Naive thymus-derived CD8-positive, alpha-beta T cell (primary cell): ENCODE measurements at regions of chr10 and their contacts with region 1.

Region 1: DNA sequence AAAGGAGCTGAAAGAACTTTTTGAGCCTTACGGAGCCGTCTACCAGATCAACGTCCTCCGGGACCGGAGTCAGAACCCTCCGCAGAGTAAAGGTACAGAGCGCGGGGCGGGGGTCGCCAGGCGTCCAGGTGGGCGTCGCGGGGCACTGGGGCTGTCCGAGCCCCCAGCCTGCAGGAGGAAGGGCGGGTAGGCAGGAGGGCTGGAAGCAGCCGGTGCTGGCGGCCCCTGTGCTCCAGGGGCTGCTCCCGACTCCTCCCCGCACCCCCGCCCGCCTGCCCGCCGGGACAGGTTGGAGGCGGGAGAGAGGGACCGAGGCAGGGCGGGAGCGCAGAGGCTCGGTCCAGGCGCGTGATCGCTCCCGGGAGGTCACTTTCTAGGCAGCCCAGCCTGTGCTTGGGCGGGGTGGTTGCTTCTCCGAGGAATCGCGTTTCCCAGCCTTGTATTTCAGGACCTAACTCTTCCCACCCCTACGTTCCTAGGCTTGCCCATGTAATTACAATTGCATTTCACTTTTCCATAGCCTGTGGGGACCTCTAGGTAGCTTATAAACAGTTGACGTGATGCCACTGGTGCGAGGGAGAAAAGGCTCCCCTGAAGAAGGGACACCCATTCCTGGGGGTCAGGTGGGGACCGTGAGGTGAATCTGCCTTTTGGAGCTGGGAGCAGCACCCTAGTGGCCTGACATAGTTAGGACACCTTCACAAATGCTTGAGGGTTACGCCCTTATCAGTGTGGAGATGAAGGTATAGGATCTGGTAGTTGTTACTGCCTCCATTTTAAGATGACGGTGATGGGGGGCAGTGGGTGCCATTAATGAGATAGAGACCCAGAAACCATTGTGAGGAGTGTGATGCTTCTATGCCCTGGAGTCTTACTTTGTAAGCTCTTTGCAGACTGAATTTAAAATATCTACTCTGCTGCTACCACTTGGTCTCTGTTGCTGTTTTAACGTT is 148.2 kb downstream of the CELF2 start:
- DNase-seq: peak; percentile 50 to 90 (median 77)
- ATAC-seq: peak; percentile 41 to 66
- H3K4me3 Mint-ChIP-seq: peak overlapping the region in 3 of 10 donors; percentile 98 to 100 (median 99)
- H3K27ac Mint-ChIP-seq: peak overlapping the region in 8 of 10 donors; percentile 96 to 100 (median 99)
- H3K4me1 Mint-ChIP-seq: peaks cover 31 to 47% (median 35%) of the 10 kb centered on the region in 4 donors
- H3K27me3 Mint-ChIP-seq: no peaks in the 10 kb centered on the region

Region 2: DNA sequence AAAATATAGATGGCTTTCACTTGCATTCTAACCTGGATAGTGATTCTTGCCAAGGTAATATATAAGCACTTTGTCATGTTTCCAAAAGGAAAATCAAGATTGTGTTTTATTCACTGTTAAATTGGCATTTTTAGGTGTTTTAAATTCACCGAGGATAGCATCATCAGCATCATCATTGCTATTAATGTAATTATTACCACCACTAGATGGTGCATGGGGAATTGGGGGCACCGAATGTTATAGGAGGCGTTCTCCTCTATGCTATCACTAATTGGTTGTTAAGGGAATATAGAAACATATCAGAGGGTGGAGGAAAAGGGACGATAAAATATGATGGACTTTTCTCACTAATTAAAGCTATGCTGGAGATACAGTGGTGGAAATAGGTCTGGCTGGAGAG is 52.7 kb before region 1 on chr10:
- POLR2A ChIA-PET with region 1: interaction called, 49 read pairs
- DNase-seq: peak in 8 of 10 donors; percentile 19 to 71 (median 52)
- ATAC-seq: peak; percentile 93 to 99
- H3K4me3 Mint-ChIP-seq: peak overlapping the region in 7 of 10 donors; percentile 5 to 79 (median 50)
- H3K27ac Mint-ChIP-seq: peak overlapping the region in 8 of 10 donors; percentile 1 to 88 (median 80)
- H3K4me1 Mint-ChIP-seq: peaks cover 7 to 24% (median 14%) of the 10 kb centered on the region in 4 donors
- H3K27me3 Mint-ChIP-seq: no peaks in the 10 kb centered on the region

Region 3: GRCh38 chr10:11118686-11119085 is 47.2 kb before region 1 on chr10:
- POLR2A ChIA-PET with region 1: interaction called, 49 read pairs
- DNase-seq: no peak
- ATAC-seq: no peak
- H3K4me3 Mint-ChIP-seq: no peak overlapping the region
- H3K27ac Mint-ChIP-seq: peak overlapping the region in 1 of 10 donors; percentile 4
- H3K4me1 Mint-ChIP-seq: peaks cover 6 to 31% (median 15%) of the 10 kb centered on the region in 4 donors
- H3K27me3 Mint-ChIP-seq: no peaks in the 10 kb centered on the region

Region 4: GRCh38 chr10:11145495-11145855 is 20.4 kb before region 1 on chr10:
- POLR2A ChIA-PET with region 1: interaction called, 970 read pairs
- DNase-seq: peak; percentile 38 to 84 (median 70)
- ATAC-seq: peak; percentile 60 to 61
- H3K4me3 Mint-ChIP-seq: peak overlapping the region; percentile 67 to 87 (median 78)
- H3K27ac Mint-ChIP-seq: peak overlapping the region in 9 of 10 donors; percentile 96 to 100 (median 98)
- H3K4me1 Mint-ChIP-seq: peaks cover 55 to 97% (median 96%) of the 10 kb centered on the region in 4 donors
- H3K27me3 Mint-ChIP-seq: no peaks in the 10 kb centered on the region

Region 5: DNA sequence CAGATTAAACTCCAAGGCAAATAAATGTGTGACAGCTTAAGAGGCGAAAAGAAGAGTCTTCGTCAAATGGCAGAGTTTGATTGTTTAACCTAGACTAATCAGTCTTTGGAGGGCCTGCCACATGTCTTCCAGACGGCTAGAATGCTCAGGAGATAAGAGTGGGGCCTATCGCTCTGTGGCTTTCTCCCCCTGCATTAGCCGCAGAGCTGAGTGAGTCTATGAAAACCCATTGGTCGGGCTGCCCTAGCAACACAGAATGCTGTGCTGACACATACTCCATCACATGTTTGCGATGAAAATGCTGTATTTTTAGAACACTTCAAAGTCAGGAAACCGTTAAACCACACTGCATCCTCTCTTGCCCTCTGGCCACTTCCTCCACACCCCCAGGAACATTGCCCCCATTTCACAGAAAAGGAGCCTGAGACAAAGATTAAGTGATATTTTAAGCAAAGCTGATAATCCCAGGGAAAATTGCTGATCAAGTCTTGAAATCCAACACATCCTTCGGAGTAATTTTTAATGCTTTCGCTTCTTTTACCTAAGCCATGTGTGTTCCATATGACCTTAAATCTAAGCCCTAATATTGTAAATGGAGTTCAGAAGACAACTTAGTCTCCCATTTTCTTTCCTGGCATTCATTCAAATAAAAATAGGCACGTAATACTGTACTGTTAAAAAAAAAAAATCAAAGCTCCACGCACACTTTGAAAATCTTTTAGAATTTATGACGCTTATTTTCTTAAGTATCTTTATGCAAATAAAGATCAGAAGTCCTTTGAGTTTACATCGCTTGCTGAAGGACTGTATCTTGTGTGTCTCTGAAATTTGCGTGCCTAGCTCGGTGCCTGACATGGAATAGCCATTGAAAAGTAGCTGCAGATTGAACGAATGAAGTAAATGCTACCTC is 13.0 kb after region 1 on chr10:
- POLR2A ChIA-PET with region 1: interaction called, 970 read pairs
- DNase-seq: peak; percentile 58 to 92 (median 86)
- ATAC-seq: peak; percentile 82 to 89
- H3K4me3 Mint-ChIP-seq: peak overlapping the region in 8 of 10 donors; percentile 74 to 89 (median 87)
- H3K27ac Mint-ChIP-seq: peak overlapping the region in 6 of 10 donors; percentile 94 to 99 (median 98)
- H3K4me1 Mint-ChIP-seq: peaks cover 31 to 97% (median 46%) of the 10 kb centered on the region in 4 donors
- H3K27me3 Mint-ChIP-seq: no peaks in the 10 kb centered on the region

Region 6: DNA sequence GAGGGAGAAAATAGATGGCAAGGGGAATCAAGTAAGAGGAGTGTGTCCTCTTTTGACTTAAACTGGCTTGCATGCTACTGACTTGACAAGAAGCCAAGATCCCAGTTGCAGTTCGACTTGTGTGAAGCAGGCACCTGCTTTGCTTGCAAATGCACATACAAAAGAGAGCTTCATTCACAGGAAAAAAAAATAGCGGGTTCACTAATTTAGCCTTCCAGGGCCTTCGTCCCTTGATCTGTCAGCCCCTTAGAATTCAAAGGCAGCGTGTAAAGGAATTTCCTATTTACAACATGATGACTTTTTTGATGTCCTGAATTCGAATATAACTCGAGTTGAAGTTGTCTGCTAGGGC is 43.9 kb after region 1 on chr10:
- POLR2A ChIA-PET with region 1: interaction called, 30 read pairs
- DNase-seq: peak in 3 of 10 donors; percentile 9 to 35 (median 25)
- ATAC-seq: peak; percentile 29
- H3K4me3 Mint-ChIP-seq: peak overlapping the region; percentile 70 to 86 (median 78)
- H3K27ac Mint-ChIP-seq: peak overlapping the region in 9 of 10 donors; percentile 76 to 94 (median 88)
- H3K4me1 Mint-ChIP-seq: peaks cover 59 to 100% (median 98%) of the 10 kb centered on the region in 4 donors
- H3K27me3 Mint-ChIP-seq: no peaks in the 10 kb centered on the region

Region 7: GRCh38 chr10:11225935-11226334 is 60.1 kb after region 1 on chr10:
- POLR2A ChIA-PET with region 1: interaction called, 31 read pairs
- DNase-seq: peak in 8 of 10 donors; percentile 22 to 70 (median 32)
- ATAC-seq: peak; percentile 51
- H3K4me3 Mint-ChIP-seq: peak overlapping the region; percentile 31 to 82 (median 68)
- H3K27ac Mint-ChIP-seq: peak overlapping the region in 9 of 10 donors; percentile 80 to 96 (median 90)
- H3K4me1 Mint-ChIP-seq: peaks cover 57 to 99% (median 85%) of the 10 kb centered on the region in 4 donors
- H3K27me3 Mint-ChIP-seq: peaks cover 0 to 2% (median 0%) of the 10 kb centered on the region in 5 donors

Region 8: DNA sequence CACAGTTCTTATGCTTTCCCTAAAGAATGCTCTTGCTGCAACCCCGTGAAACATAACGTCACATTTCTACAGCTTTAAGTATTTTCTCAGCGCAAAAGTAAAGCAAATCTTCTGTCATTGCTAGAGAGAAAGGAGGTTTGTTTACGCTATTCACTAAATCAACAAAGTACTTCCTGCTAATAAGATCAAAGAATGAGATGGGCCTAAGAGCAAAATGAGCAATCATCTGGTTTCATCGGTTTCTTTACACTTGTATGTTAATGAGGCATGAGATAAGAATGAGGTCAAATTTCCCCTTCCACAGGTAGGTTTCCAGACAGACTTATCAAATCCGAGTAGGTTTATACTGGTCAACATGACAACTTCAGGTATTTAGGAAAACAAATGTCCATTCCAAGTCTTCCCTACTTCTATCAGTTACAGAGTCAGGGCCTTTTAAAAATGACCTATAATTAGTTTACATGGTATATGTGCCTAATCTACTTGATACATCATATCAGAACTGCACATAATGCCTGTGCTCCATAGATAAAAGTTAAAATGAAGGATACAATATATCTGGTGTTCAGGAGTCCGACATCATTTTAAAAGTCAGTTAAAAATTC is 437.2 kb after region 1 on chr10:
- POLR2A ChIA-PET with region 1: no interaction called
- DNase-seq: no peak
- ATAC-seq: no peak
- H3K4me3 Mint-ChIP-seq: peak overlapping the region in 1 of 10 donors; percentile 0
- H3K27ac Mint-ChIP-seq: peak overlapping the region in 1 of 10 donors; percentile 75
- H3K4me1 Mint-ChIP-seq: peaks cover 17 to 71% (median 42%) of the 10 kb centered on the region in 4 donors
- H3K27me3 Mint-ChIP-seq: no peaks in the 10 kb centered on the region